ENCODE measurements at regions of chr17 and their contacts with region 1.

Region 1: GRCh38 chr17:45719335-45720071 is 64.6 kb upstream of the CRHR1 start:
- DNase-seq: peak; percentile 88
- H3K4me3 ChIP-seq: no peak overlapping the region
- H3K27ac ChIP-seq: no peak overlapping the region
- H3K4me1 ChIP-seq: peaks cover 5% of the 10 kb centered on the region
- H3K27me3 ChIP-seq: no peaks in the 10 kb centered on the region
- CTCF ChIP-seq: peak; percentile 60 to 65

Region 2: DNA sequence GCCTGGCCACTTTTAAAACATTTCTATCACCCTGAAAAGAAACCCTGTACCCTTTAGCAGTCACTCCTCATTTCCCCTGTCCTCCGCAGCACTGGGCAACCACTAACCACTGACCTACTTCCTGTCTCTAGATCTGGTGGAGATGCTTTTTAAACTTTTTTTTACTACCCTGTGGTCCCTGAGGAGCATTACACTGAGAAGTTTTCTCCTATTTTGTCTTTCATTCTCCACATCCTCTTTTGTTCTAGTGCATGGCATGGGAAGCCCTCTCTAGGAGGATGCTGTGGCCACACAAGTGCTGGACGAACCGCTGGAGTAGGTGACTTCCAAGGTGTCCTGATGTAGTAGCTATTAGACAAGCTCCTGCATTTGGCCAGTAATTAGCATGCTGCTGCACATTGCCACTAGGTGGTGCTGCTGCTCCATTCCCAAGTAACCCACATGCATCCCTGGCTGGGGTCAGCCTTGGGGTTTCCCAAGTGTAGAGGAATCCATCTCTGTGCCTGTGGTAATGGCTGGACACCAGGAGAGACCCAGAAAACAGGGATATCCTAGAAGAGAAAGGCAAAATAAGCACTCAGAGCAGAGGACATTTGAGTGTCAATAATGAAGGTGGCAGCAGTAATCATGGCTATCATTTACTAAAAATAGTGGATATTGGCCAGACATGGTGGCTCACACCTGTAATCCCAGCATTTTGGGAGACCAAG is 79.2 kb before region 1 on chr17:
- CTCF ChIA-PET with region 1: no interaction called
- dilution Hi-C with region 1: no loop called
- in situ Hi-C with region 1: no loop called
- intact Hi-C with region 1: no loop called
- DNase-seq: peak; percentile 39
- H3K4me3 ChIP-seq: no peak overlapping the region
- H3K27ac ChIP-seq: no peak overlapping the region
- H3K4me1 ChIP-seq: no peaks in the 10 kb centered on the region
- H3K27me3 ChIP-seq: no peaks in the 10 kb centered on the region
- CTCF ChIP-seq: peak; percentile 97 to 99

Region 3: GRCh38 chr17:45790296-45790922 is 70.9 kb after region 1 on chr17:
- CTCF ChIA-PET with region 1: interaction called, 10 read pairs
- dilution Hi-C with region 1: no loop called
- in situ Hi-C with region 1: no loop called
- intact Hi-C with region 1: no loop called
- DNase-seq: no peak
- H3K4me3 ChIP-seq: no peak overlapping the region
- H3K27ac ChIP-seq: no peak overlapping the region
- H3K4me1 ChIP-seq: no peaks in the 10 kb centered on the region
- H3K27me3 ChIP-seq: peaks cover 13% of the 10 kb centered on the region
- CTCF ChIP-seq: no peak

Region 4: GRCh38 chr17:45841883-45842525 is 122.5 kb after region 1 on chr17:
- CTCF ChIA-PET with region 1: no interaction called
- dilution Hi-C with region 1: no loop called
- in situ Hi-C with region 1: no loop called
- intact Hi-C with region 1: no loop called
- DNase-seq: peak; percentile 14
- H3K4me3 ChIP-seq: no peak overlapping the region
- H3K27ac ChIP-seq: no peak overlapping the region
- H3K4me1 ChIP-seq: no peaks in the 10 kb centered on the region
- H3K27me3 ChIP-seq: no peaks in the 10 kb centered on the region
- CTCF ChIP-seq: no peak

Measured in mammary epithelial cell (primary cell).